Activated CD4-positive, alpha-beta memory T cell treated with anti-CD3 and anti-CD28 coated beads for 36 hours (primary cell): ENCODE measurements at regions of chr20 and their contacts with region 1.

Region 1: GRCh38 chr20:25399037-25399430 is 8.4 kb upstream of the ABHD12 start:
- DNase-seq: peak; percentile 23
- H3K4me3 Mint-ChIP-seq: no peak overlapping the region
- H3K27ac Mint-ChIP-seq: no peak overlapping the region
- H3K4me1 Mint-ChIP-seq: no peaks in the 10 kb centered on the region
- H3K27me3 Mint-ChIP-seq: no peaks in the 10 kb centered on the region

Region 2: GRCh38 chr20:25294459-25295385 is 104.3 kb before region 1 on chr20:
- CTCF ChIA-PET with region 1: interaction called, 44 read pairs
- POLR2A ChIA-PET with region 1: no interaction called
- intact Hi-C with region 1: loop called (anchors 1 kb)
- DNase-seq: peak; percentile 74
- H3K4me3 Mint-ChIP-seq: no peak overlapping the region
- H3K27ac Mint-ChIP-seq: no peak overlapping the region
- H3K4me1 Mint-ChIP-seq: no peaks in the 10 kb centered on the region
- H3K27me3 Mint-ChIP-seq: no peaks in the 10 kb centered on the region

Region 3: GRCh38 chr20:25299806-25300205 is 99.2 kb before region 1 on chr20:
- CTCF ChIA-PET with region 1: interaction called, 44 read pairs
- POLR2A ChIA-PET with region 1: no interaction called
- intact Hi-C with region 1: no loop called
- DNase-seq: no peak
- H3K4me3 Mint-ChIP-seq: no peak overlapping the region
- H3K27ac Mint-ChIP-seq: no peak overlapping the region
- H3K4me1 Mint-ChIP-seq: no peaks in the 10 kb centered on the region
- H3K27me3 Mint-ChIP-seq: no peaks in the 10 kb centered on the region

Region 4: GRCh38 chr20:25310268-25310920 is 88.6 kb before region 1 on chr20:
- CTCF ChIA-PET with region 1: interaction called, 8 read pairs
- POLR2A ChIA-PET with region 1: no interaction called
- intact Hi-C with region 1: loop called (anchors 1 kb)
- DNase-seq: peak; percentile 79
- H3K4me3 Mint-ChIP-seq: peak overlapping the region; percentile 61
- H3K27ac Mint-ChIP-seq: peak overlapping the region; percentile 89
- H3K4me1 Mint-ChIP-seq: peaks cover 31% of the 10 kb centered on the region
- H3K27me3 Mint-ChIP-seq: no peaks in the 10 kb centered on the region

Region 5: GRCh38 chr20:25424536-25424935 is 25.5 kb after region 1 on chr20:
- CTCF ChIA-PET with region 1: no interaction called
- POLR2A ChIA-PET with region 1: no interaction called
- intact Hi-C with region 1: no loop called
- DNase-seq: no peak
- H3K4me3 Mint-ChIP-seq: no peak overlapping the region
- H3K27ac Mint-ChIP-seq: no peak overlapping the region
- H3K4me1 Mint-ChIP-seq: peaks cover 14% of the 10 kb centered on the region
- H3K27me3 Mint-ChIP-seq: no peaks in the 10 kb centered on the region